Heart left ventricle (tissue), 16 donors: ENCODE measurements at regions of chr1 and their contacts with region 1.

Region 1: DNA sequence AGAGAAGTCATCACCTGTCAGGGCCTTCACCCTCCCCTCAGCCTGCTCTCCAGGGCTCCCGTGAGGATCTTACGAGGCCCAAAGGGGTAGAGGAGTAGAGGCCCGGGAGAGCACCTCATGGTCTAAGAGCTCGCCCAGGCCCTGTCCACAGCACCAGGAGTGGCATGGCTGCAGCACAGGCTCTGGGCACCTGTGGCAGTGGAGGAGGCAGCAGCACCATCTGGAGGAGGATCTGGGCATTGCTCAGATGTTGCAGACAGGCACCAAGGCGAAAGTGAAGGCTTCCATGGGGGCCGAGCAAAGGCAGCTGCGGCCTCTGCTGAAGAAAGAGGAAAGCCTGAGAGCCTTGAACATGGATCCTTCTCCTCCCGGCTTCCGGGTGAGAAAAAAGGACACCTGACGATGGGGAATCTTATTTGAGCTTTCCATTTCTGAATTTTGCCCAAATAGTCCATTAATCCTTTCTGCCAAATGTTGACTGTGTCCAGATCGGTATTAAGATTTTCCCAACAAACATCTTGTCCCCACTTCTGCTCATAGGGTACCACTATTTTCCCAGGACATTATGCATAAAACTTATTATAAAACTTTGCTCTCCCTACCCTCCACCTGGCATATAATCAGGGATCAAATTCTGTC is 604.7 kb downstream of the PTPRC start:
- DNase-seq: peak; percentile 21 to 70 (median 47)
- ATAC-seq: peak in 3 of 4 donors; percentile 77 to 87 (median 83)
- H3K4me3 ChIP-seq: no peak overlapping the region
- H3K27ac ChIP-seq: no peak overlapping the region
- H3K4me1 ChIP-seq: no peaks in the 10 kb centered on the region
- H3K27me3 ChIP-seq: no peaks in the 10 kb centered on the region
- CTCF ChIP-seq: peak; percentile 42 to 65 (median 57)
- POLR2A ChIP-seq: no peak

Region 2: DNA sequence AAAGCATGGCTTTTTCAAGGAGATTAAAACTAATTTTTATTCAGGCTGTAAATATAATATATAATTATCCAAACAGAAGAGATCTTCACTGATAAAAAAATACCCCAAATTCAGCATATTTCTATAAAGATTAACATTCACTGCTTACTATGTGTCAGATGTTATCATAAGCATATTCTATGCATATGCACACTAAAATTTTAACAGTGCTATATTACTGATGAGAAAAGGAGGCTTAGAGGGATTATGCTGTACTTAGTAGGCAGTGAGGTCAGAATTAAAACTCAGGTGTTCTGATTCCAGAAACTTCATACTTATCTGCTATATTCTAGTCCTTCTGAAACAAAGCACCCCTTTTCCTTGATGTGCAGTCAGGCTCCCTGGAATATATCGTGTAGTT is 669.2 kb before region 1 on chr1:
- intact Hi-C with region 1: no loop called
- DNase-seq: no peak
- ATAC-seq: no peak
- H3K4me3 ChIP-seq: no peak overlapping the region
- H3K27ac ChIP-seq: no peak overlapping the region
- H3K4me1 ChIP-seq: no peaks in the 10 kb centered on the region
- H3K27me3 ChIP-seq: no peaks in the 10 kb centered on the region
- CTCF ChIP-seq: no peak
- POLR2A ChIP-seq: no peak

Region 3: DNA sequence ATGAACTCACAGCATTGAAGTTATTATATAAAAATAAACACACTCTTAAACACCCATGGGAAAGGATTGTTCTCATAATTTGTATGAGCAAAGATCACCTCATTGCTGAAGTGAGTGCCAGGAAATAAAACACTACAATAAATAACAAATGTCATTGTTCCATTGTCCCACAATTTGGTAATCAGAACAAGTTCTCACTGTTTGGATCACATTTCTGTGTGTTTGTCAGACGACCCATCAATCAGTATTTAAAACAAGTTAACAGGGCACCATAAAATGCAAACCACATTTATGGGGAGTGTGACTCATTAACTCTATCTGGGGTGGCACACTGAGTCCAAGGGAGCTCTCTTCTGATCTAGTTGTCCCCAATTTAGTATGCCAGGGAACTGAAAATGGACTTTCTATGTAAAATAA is 480.2 kb before region 1 on chr1:
- intact Hi-C with region 1: loop called in 4 of 10 experiments (anchors 5 to 10 kb)
- DNase-seq: no peak
- ATAC-seq: peak in 1 of 4 donors; percentile 18
- H3K4me3 ChIP-seq: no peak overlapping the region
- H3K27ac ChIP-seq: no peak overlapping the region
- H3K4me1 ChIP-seq: peaks cover 0 to 6% (median 0%) of the 10 kb centered on the region in 12 donors
- H3K27me3 ChIP-seq: no peaks in the 10 kb centered on the region
- CTCF ChIP-seq: no peak
- POLR2A ChIP-seq: no peak

Region 4: GRCh38 chr1:198771563-198772153 is 471.9 kb before region 1 on chr1:
- intact Hi-C with region 1: loop called in 5 of 10 experiments (anchors 5 to 10 kb)
- DNase-seq: no peak
- ATAC-seq: no peak
- H3K4me3 ChIP-seq: no peak overlapping the region
- H3K27ac ChIP-seq: no peak overlapping the region
- H3K4me1 ChIP-seq: peaks cover 0 to 22% (median 0%) of the 10 kb centered on the region in 12 donors
- H3K27me3 ChIP-seq: no peaks in the 10 kb centered on the region
- CTCF ChIP-seq: peak; percentile 16 to 53 (median 43)
- POLR2A ChIP-seq: no peak

Region 5: GRCh38 chr1:200207711-200208126 is 964.2 kb after region 1 on chr1:
- intact Hi-C with region 1: no loop called
- DNase-seq: no peak
- ATAC-seq: no peak
- H3K4me3 ChIP-seq: no peak overlapping the region
- H3K27ac ChIP-seq: no peak overlapping the region
- H3K4me1 ChIP-seq: no peaks in the 10 kb centered on the region
- H3K27me3 ChIP-seq: no peaks in the 10 kb centered on the region
- CTCF ChIP-seq: no peak
- POLR2A ChIP-seq: no peak